ENCODE measurements at regions of chr21 and their contacts with region 1.

Region 1: DNA sequence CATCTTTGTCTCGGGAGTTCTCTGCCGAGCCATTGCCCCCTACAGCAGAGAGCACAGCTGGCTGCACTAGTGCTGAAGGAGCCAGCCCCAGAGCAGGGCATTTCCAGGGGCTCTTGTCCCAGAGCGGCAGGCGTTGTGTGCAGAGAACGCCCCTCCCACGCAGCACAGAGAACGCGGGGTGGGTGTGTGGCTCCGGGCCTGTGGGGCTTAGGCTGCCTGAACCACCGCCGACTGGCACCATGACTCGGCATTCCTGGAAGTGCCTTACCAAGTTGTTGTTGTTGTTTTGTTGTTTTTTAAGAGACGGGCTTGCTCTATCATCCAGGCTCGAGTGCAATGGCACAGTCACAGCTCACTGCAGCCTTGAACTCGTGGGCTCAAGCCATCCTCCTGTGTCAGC is 15.8 kb upstream of the DIP2A start:
- DNase-seq: no peak
- H3K4me3 ChIP-seq: no peak overlapping the region
- H3K4me1 ChIP-seq: no peaks in the 10 kb centered on the region
- H3K27me3 ChIP-seq: no peaks in the 10 kb centered on the region

Region 2: DNA sequence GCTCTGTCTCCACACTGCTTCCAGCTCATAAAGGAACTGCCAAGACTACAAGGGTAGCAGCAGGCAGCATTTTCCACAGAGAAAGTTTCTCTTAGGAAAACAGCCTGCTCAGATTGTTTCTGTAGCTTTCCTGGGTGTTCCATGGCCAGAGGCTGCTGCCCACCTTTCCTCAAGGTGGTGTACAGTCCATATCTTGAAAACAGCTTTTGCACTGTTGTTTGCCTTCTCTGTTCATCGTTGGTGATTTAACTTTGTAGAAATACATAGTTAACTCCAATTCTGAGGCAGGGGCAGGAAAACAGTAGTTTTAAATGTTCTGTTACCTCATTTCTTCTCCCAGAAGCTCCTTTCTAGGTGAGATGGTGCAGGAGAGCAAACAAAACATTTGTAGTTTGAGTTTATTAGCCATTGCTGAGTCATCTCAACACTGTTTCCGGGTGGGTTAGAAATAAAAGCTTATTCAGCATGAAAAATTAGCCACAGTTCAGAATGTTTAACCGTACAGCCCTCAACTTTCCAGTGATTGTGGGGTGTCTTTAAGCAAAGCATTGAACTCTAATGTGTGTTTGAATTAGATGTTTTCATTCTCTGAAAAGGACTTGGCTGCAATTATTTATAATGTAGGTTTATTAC is 57.4 kb after region 1 on chr21:
- in situ Hi-C with region 1: loop called (anchors 10 kb)
- DNase-seq: no peak
- H3K4me3 ChIP-seq: no peak overlapping the region
- H3K4me1 ChIP-seq: no peaks in the 10 kb centered on the region
- H3K27me3 ChIP-seq: no peaks in the 10 kb centered on the region

Region 3: DNA sequence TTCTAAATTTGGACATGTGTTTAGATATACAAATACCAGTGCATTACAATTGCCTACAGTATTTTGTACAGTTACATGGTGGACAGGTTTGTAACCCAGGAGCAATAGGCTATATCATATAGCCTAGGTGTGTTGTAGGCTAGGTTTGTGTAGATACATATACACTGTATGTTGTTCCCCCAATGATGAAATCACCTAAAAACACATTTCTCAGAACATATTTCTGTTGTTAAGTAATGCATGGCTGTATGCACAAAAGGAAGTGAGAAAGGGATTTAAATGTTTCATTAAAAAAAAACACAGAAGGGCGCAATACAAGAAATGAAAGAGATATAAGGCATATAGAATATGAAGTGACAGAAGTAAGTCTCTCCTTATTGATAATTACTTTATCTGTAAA is 129.9 kb after region 1 on chr21:
- in situ Hi-C with region 1: no loop called
- DNase-seq: no peak
- H3K4me3 ChIP-seq: no peak overlapping the region
- H3K4me1 ChIP-seq: no peaks in the 10 kb centered on the region
- H3K27me3 ChIP-seq: no peaks in the 10 kb centered on the region

Measured in HAP-1 (cell line).